CD4-positive, alpha-beta T cell (primary cell): ENCODE measurements at regions of chr7 and their contacts with region 1.

Region 1: DNA sequence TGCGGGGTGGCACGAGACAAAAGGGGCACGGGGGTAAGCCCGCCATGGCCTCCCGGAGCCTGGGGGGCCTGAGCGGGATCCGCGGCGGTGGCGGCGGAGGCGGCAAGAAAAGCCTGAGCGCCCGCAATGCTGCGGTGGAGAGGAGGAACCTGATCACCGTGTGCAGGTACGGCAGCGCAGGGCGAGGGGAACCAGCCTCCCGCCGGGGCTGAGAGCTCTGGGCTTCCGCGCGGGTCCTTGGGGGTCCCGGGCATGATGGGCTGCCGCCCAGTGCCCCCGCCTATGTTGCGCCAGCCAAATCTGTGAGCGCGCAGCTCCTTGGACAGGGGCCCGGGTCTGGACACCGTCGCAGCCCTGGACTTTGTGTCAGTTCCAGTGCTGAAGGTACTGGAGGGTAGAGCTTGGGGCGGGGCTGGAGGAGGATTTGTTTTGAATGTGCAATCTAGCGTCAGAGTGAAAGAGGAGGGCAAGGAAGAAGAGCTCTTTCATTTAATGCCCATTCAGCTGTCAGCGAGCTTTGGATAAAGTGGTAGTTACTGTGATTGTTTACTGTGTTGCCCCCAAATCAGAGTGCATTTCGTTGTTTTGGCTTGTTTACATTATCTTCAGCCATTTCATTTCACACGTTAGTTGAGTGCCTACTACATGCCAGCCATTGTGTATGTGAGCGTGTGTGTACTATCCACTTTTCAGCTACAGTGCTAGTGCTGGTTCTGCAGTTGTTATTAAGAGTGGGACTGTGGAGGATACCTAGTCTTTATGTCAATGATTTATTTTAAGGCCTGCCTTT is 777 bp downstream of the RUNDC3B start:
- DNase-seq: peak in 11 of 14 experiments; percentile 1 to 50 (median 15)
- ATAC-seq: peak; percentile 28
- H3K4me3 ChIP-seq: peak overlapping the region; percentile 69
- H3K4me3 Mint-ChIP-seq: peak overlapping the region; percentile 87
- H3K27ac ChIP-seq: no peak overlapping the region
- H3K27ac Mint-ChIP-seq: peak overlapping the region; percentile 78
- H3K4me1 ChIP-seq: peaks cover 18% of the 10 kb centered on the region
- H3K4me1 Mint-ChIP-seq: peaks cover 18% of the 10 kb centered on the region
- H3K27me3 ChIP-seq: peaks cover 8 to 11% of the 10 kb centered on the region in 2 experiments
- H3K27me3 Mint-ChIP-seq: peaks cover 16% of the 10 kb centered on the region
- CTCF ChIP-seq: no peak

Region 2: GRCh38 chr7:87600130-87601124 is 28.5 kb before region 1 on chr7 and contains the start of gene ABCB1:
- CTCF ChIA-PET with region 1: no interaction called
- POLR2A ChIA-PET with region 1: interaction called, 33 read pairs
- intact Hi-C with region 1: loop called in 1 of 2 experiments (anchors 2 kb)
- DNase-seq: peak; percentile 4 to 74 (median 33)
- ATAC-seq: peak; percentile 94
- H3K4me3 ChIP-seq: peak within 1 kb of the TSS; percentile 72
- H3K4me3 Mint-ChIP-seq: peak within 1 kb of the TSS; percentile 86
- H3K27ac ChIP-seq: peak within 1 kb of the TSS in 1 of 2 donors; percentile 36
- H3K27ac Mint-ChIP-seq: peak within 1 kb of the TSS; percentile 59
- H3K4me1 ChIP-seq: peaks cover 16% of the 10 kb centered on the region
- H3K4me1 Mint-ChIP-seq: peaks cover 36% of the 10 kb centered on the region
- H3K27me3 ChIP-seq: peaks cover 4 to 7% of the 10 kb centered on the region in 2 experiments
- H3K27me3 Mint-ChIP-seq: peaks cover 29% of the 10 kb centered on the region
- CTCF ChIP-seq: no peak
- total RNA-seq, gene ABCB1: 10.6 to 12.2 TPM